Calu3 (cell line): ENCODE measurements at regions of chr2 and their contacts with region 1.

Region 1: DNA sequence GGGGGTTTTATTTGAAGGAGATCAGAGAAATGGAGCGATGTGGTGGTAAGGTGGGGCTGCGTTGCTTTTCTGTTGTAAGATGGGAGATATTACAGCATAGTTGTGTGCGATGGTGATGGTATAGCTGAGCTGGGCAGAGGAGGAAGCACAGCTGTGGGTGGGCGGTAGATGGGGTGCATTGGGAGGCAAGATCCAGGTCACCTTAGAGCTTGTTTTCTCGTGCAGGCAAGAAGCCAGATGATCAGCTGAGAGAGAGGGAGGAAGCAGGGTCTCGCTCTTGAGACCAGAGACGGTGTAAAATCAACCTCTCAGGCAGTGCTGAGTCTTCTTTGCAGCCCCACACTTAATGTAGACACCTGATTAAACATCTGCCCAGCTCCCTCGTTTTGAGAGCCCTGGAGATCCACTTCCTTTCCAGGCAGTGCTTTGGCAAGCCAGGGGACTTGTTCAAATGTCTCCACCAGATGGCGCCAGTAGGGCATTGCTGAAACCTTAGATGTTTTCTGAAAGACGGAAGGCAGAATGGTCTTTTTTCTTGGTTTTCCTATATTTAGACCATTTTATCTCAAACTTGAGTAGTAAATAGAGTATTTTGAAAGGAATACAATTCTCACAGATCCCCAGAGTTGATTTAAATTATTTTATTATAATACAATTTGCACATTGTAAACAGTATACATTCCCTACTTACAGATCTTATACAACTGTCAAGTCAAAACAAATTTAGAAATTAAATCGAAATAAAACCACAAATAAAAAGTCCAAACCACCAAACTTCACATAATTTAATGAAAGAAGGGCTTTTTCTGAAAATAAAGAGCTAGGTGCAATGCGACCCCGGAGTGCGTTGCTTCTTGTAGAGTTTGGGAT is 21.1 kb upstream of the LYPD6B start:
- DNase-seq: peak; percentile 82
- H3K4me3 Mint-ChIP-seq: no peak overlapping the region
- H3K27ac Mint-ChIP-seq: no peak overlapping the region
- H3K4me1 Mint-ChIP-seq: peaks cover 22% of the 10 kb centered on the region
- H3K27me3 Mint-ChIP-seq: peaks cover 27% of the 10 kb centered on the region
- CTCF ChIP-seq: peak; percentile 51

Region 2: DNA sequence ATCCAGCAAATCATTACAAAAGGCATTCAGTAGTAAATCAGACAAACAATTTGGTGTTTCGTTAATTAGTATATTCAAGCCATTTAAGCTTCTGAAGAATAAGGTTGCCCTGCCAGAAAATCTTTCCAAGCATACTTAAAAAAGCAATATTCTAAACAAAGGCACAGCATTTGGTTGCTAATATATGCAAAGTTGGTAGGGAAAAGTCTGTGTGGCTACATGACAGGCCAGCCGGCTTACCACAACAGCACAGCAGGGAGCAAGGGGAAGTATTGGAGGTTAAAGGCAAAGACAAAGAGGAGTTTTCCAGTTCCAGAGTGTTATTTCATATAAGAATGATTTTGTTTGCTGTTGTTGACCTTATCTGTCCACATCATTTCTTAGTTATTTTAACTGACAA is 714.2 kb before region 1 on chr2:
- CTCF ChIA-PET with region 1: no interaction called
- intact Hi-C with region 1: no loop called
- DNase-seq: no peak
- H3K4me3 Mint-ChIP-seq: no peak overlapping the region
- H3K27ac Mint-ChIP-seq: no peak overlapping the region
- H3K4me1 Mint-ChIP-seq: peaks cover 11% of the 10 kb centered on the region
- H3K27me3 Mint-ChIP-seq: no peaks in the 10 kb centered on the region
- CTCF ChIP-seq: no peak

Region 3: GRCh38 chr2:149313512-149313972 is 296.2 kb after region 1 on chr2:
- CTCF ChIA-PET with region 1: interaction called, 10 read pairs
- intact Hi-C with region 1: loop called (anchors 2 kb)
- DNase-seq: peak; percentile 28
- H3K4me3 Mint-ChIP-seq: no peak overlapping the region
- H3K27ac Mint-ChIP-seq: no peak overlapping the region
- H3K4me1 Mint-ChIP-seq: no peaks in the 10 kb centered on the region
- H3K27me3 Mint-ChIP-seq: peaks cover 9% of the 10 kb centered on the region
- CTCF ChIP-seq: peak; percentile 61

Region 4: DNA sequence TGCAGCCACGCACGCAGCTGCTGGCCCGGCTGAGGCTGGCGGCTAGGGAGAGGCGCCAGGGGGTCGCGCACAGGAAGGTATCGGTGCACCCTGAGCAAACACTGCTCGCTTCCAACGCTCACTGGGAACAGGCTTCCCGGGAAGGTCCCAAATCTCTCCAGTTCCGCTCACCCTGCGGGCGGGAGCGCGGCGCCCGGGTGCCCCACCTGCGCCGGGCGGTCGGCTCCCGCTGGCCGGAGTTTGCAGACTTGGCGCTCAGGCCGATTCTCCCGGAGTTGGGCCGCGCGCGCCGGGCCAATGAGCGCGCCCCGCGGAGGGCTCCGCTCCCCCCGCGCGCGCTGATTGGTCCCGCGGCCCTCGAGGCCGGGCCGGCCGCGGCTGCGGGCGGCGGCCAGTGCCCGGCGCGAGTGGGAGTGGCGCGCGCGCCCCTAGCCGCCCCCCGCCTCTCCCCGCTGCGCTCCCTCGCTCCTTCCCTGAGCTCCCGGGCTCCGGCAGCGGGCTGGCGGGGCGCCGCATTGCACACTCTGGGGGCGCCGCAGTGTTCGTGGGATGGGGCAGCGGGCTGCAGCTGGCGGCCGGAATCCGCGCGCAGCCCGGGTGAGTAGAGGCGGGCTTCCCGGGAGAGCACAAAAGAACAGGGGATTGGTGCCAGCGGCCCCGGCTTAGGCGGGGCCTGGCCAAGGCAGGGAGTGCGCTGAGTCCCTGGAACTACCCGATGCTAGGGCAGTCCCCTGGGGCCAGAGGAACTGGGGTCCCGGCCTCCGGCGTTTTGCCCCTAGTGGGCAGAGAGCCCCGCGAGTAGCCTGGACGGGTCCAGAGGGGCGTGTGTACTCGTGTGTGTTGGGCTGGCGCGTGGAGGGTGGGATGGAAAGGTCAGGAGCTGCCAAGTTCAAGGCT is 313.0 kb after region 1 on chr2 and contains the start of gene LYPD6:
- CTCF ChIA-PET with region 1: no interaction called
- intact Hi-C with region 1: loop called (anchors 5 kb)
- DNase-seq: peak; percentile 83
- H3K4me3 Mint-ChIP-seq: peak within 1 kb of the TSS; percentile 97
- H3K27ac Mint-ChIP-seq: peak within 1 kb of the TSS; percentile 85
- H3K4me1 Mint-ChIP-seq: peaks cover 8% of the 10 kb centered on the region
- H3K27me3 Mint-ChIP-seq: peaks cover 25% of the 10 kb centered on the region
- CTCF ChIP-seq: no peak
- total RNA-seq, gene LYPD6: 3.4 and 3.9 TPM in 2 replicates

Region 5: GRCh38 chr2:149573760-149574159 is 556.4 kb after region 1 on chr2:
- CTCF ChIA-PET with region 1: interaction called, 10 read pairs
- intact Hi-C with region 1: no loop called
- DNase-seq: no peak
- H3K4me3 Mint-ChIP-seq: no peak overlapping the region
- H3K27ac Mint-ChIP-seq: no peak overlapping the region
- H3K4me1 Mint-ChIP-seq: peaks cover 17% of the 10 kb centered on the region
- H3K27me3 Mint-ChIP-seq: no peaks in the 10 kb centered on the region
- CTCF ChIP-seq: peak; percentile 19